Activated CD4-positive, alpha-beta T cell treated with anti-CD3 and anti-CD28 coated beads, Interleukin-2, amount 10 ng/mL, durations not matched to agents 7 days and 5 days (primary cell): ENCODE measurements at regions of chr2 and their contacts with region 1.

Region 1: GRCh38 chr2:222690564-222691200 is 19.2 kb downstream of the MOGAT1 start:
- DNase-seq: peak; percentile 82
- H3K4me3 Mint-ChIP-seq: no peak overlapping the region
- H3K27ac Mint-ChIP-seq: no peak overlapping the region
- H3K4me1 Mint-ChIP-seq: peaks cover 11% of the 10 kb centered on the region
- H3K27me3 Mint-ChIP-seq: peaks cover 8% of the 10 kb centered on the region

Region 2: DNA sequence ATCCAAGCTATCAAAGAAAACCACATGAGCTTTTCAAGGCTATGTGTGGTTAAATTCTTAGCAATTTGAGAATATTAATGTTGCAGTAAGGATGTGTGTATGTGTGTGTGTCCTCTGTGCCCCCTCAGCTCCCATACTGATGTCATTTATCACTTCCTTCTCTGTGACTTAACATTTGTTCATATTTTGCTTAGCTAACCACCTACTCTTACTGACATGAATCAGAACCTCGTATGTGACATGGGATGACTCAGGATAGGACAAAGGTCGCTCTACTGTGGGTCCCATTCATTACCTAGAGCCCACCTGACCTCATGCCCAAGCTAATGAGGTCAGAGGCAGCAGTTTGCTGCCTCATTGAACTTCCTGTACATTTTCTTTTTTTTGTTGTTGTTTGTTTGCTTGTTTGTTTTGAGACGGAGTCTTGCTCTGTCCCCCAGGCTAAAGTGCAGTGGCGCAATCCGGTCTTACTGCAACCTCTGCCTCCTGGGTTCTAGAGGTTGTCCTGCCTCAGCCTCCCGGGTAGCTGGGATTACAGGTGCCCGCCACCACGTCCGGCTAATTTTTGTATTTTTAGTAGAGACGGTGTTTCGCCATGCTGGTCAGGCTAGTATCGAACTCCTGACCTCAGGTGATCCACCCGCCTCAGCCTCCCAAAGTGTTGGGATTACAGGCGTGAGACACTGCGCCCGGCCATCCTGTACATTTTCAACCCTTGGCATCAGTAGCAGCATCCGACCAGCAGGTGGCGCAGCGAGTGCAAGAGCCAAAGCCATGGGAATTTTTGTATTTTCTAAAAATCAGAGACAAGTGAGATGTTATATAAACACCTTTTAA is 17.2 kb after region 1 on chr2:
- CTCF ChIA-PET with region 1: interaction called, 20 read pairs
- POLR2A ChIA-PET with region 1: no interaction called
- DNase-seq: peak; percentile 79
- H3K4me3 Mint-ChIP-seq: no peak overlapping the region
- H3K27ac Mint-ChIP-seq: no peak overlapping the region
- H3K4me1 Mint-ChIP-seq: peaks cover 16% of the 10 kb centered on the region
- H3K27me3 Mint-ChIP-seq: peaks cover 14% of the 10 kb centered on the region